ENCODE measurements at regions of chrX and their contacts with region 1.

Region 1: DNA sequence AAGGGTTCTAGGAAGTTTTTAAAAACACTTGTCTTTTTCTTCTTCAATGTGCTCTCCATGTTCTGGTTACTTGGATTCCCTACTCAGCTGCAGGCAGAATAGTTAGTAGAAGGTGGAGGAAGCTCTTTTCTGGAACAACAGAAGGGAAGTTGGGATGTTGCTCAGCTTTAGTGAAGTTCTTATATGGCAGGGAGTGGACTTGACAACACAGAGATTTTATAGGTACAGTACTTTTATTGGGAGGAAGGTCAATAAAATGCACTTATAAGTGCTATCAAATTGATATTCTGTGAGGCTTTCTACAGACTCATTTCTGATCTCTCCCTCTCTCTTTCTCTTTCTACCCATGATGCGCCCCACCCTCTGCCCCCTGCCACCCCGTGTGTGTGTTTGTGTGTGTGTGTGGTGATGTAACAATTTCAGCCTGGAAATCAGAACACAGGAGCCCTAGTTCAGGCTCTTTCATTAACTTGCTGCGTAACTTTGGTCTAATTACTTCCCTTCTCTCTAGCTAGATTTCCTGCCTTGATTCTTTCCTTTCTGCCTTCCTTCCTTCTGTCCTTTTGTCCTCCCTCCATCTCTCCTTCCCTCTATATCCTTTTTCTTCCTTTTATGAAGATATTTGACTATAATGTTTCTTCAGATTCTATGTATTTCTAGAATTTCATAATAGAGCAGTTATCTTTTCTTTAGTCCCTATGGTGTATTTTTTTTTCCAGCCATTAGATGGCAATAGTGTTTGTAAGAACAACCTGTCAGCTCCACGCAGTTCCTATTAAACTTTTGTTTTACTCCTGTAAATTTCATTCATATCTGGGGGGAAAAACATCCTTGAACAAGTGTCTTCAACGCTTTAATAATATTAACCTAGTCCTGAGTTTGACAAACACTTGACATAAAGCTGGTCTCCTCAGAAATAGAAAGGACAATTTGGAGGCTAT is 37.1 kb downstream of the HEPH start:
- DNase-seq: no peak
- H3K4me3 ChIP-seq: no peak overlapping the region
- H3K27ac ChIP-seq: no peak overlapping the region
- H3K4me1 ChIP-seq: no peaks in the 10 kb centered on the region
- H3K27me3 ChIP-seq: no peaks in the 10 kb centered on the region
- CTCF ChIP-seq: peak in 1 of 3 experiments; percentile 46

Region 2: DNA sequence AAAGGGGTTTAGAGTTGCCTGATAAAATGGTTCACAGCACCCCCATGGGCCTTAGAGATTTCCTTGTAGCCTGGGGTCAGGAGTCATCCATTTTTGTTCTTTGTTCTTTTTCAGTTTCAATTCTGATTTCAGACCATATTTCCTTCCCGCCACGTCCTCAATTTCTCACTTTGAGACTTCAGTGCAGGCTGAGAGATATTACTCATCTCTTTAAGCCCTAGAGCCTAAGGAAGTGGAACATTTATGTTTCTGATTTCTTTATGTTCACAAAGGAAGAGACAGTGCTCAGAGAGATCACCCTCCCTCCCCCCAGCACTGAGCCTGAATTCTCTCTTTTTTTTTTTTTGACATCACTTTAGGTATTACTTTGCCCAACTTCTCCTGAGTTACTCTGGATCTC is 477.4 kb before region 1 on chrX:
- intact Hi-C with region 1: no loop called
- DNase-seq: no peak
- H3K4me3 ChIP-seq: no peak overlapping the region
- H3K27ac ChIP-seq: peak overlapping the region in 1 of 2 donors; percentile 27
- H3K4me1 ChIP-seq: peaks cover 0 to 5% of the 10 kb centered on the region in 2 donors
- H3K27me3 ChIP-seq: no peaks in the 10 kb centered on the region
- CTCF ChIP-seq: no peak

Region 3: DNA sequence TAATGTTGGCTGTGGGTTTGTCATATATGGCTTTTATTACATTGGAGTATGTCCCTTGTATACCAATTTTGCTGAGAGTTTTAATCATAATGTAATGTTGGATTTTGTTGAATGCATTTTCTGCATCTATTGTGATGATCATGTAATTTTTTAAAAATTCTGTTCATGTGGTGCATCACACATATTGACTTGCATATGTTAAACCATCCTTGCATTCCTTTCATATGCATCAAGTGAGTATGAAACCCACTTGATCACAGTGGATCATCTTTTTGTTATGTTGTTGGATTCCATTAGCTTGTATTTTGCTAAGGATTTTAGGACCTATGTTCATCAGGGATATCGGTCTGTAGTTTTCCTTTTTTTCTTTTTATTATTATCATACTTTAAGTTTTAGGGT is 25.0 kb before region 1 on chrX:
- intact Hi-C with region 1: no loop called
- DNase-seq: no peak
- H3K4me3 ChIP-seq: no peak overlapping the region
- H3K27ac ChIP-seq: no peak overlapping the region
- H3K4me1 ChIP-seq: no peaks in the 10 kb centered on the region
- H3K27me3 ChIP-seq: no peaks in the 10 kb centered on the region
- CTCF ChIP-seq: no peak

Region 4: GRCh38 chrX:66579219-66579618 is 378.1 kb after region 1 on chrX:
- intact Hi-C with region 1: no loop called
- DNase-seq: no peak
- H3K4me3 ChIP-seq: no peak overlapping the region
- H3K27ac ChIP-seq: no peak overlapping the region
- H3K4me1 ChIP-seq: no peaks in the 10 kb centered on the region
- H3K27me3 ChIP-seq: no peaks in the 10 kb centered on the region
- CTCF ChIP-seq: no peak

Region 5: GRCh38 chrX:66728818-66729271 is 527.7 kb after region 1 on chrX:
- intact Hi-C with region 1: loop called (anchors 2 kb)
- DNase-seq: peak in 1 of 2 donors; percentile 68
- H3K4me3 ChIP-seq: peak overlapping the region; percentile 47 to 59
- H3K27ac ChIP-seq: no peak overlapping the region
- H3K4me1 ChIP-seq: no peaks in the 10 kb centered on the region
- H3K27me3 ChIP-seq: no peaks in the 10 kb centered on the region
- CTCF ChIP-seq: peak; percentile 40 to 71 (median 57)

Measured in ascending aorta (tissue), 2 donors.